WTC11 (cell line): ENCODE measurements at regions of chr11 and their contacts with region 1.

Region 1: DNA sequence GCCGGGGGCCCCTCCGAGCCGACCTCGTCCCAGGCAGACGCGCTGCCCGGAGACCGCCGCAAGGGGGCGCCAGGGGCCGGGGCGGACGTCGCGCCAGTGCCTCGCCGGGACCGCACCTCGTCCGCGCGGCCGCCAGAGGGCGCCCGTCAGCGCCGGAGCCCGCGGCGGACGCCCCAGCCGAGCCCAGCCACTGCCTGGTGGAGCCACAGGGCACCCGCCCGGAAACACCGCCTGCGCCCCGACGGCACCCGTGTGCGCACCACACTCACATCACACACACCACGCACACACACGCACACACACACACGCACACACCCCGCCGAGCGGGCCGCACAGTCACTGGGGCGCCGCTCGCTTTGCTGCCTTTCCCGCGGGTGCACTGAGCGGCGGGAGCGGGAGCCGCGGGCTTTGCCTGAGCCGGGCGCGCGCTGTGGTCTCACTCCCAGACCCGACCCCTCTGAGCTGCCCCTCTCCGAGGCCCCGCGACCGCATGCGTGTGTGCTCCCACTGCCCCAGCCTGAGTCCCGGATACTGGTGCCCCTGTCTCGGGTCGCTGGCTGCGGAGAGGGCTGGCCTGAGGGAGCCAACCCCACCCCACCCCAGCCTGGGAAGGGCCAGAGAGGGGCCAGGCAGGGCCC is 449.3 kb downstream of the OPCML start:
- DNase-seq: peak; percentile 86
- ATAC-seq: peak; percentile 78
- H3K4me3 Mint-ChIP-seq: peak overlapping the region; percentile 71
- H3K27ac Mint-ChIP-seq: no peak overlapping the region
- H3K4me1 Mint-ChIP-seq: peaks cover 31% of the 10 kb centered on the region
- H3K27me3 Mint-ChIP-seq: peaks cover 22% of the 10 kb centered on the region
- CTCF ChIP-seq: peak; percentile 98

Region 2: DNA sequence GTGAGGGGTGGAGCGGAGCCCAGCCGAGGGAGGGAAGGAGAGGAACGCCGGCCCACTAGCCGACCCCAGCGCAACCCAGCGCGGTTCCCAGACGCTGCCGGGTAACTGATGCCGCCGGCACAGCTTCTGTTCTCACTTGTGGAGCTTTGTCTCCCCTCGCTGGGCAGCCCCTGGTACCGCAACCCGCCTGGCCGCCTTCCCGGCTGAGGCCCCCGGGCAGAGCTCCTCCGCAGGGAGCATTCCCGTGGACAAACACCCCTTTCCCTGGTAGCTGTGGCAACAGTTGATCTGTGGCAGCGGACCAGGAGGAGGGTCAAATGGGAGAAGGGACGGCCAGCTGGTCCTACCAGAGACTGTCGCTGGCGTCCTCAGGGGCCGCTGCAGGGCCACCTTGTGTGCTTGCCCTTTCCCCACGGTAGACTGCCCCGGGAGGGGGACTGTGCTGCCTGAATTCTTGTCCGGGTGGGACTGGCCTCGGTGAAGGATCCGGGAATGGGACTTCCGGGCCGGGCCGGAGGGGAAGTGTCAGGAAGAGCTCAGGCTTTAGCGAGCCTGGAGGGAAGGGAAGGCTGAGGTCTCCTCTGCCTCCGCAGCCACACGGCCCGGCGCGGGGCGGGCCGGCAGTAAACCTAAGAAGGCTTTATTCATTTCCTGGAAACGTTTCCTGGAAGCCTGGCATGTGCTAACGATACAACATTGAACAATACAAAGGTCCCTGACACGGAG is 18.7 kb before region 1 on chr11:
- CTCF ChIA-PET with region 1: interaction called, 23 read pairs
- POLR2A ChIA-PET with region 1: no interaction called
- DNase-seq: peak; percentile 90
- ATAC-seq: peak; percentile 90
- H3K4me3 Mint-ChIP-seq: peak overlapping the region; percentile 72
- H3K27ac Mint-ChIP-seq: no peak overlapping the region
- H3K4me1 Mint-ChIP-seq: peaks cover 18% of the 10 kb centered on the region
- H3K27me3 Mint-ChIP-seq: peaks cover 10% of the 10 kb centered on the region
- CTCF ChIP-seq: peak; percentile 37; the same call in 1 of the 2 replicates

Region 3: DNA sequence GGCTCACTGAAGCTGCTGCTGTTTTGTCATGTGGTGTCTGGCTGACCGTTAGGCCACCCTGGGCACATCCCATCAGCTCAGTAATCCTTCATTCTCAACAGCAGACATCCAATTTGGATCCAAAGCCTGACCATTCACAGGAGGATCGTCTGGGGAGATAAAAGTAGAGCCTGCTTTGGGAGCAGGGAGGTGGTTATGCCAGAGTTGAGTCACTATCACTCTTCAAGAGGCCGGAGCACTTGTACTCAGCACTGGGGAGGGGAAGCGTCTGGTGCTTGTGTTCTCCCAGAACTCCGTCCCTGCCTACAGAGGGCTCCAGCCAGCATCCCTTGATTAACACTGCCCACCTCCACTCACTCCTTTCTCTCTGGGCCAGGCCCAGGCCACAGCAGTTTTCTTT is 66.7 kb after region 1 on chr11:
- CTCF ChIA-PET with region 1: interaction called, 16 read pairs
- POLR2A ChIA-PET with region 1: no interaction called
- DNase-seq: no peak
- ATAC-seq: peak; percentile 81
- H3K4me3 Mint-ChIP-seq: no peak overlapping the region
- H3K27ac Mint-ChIP-seq: no peak overlapping the region; the same call in 1 of the 2 replicates
- H3K4me1 Mint-ChIP-seq: peaks cover 32% of the 10 kb centered on the region
- H3K27me3 Mint-ChIP-seq: no peaks in the 10 kb centered on the region; the same call in 1 of the 2 replicates
- CTCF ChIP-seq: no peak

Region 4: DNA sequence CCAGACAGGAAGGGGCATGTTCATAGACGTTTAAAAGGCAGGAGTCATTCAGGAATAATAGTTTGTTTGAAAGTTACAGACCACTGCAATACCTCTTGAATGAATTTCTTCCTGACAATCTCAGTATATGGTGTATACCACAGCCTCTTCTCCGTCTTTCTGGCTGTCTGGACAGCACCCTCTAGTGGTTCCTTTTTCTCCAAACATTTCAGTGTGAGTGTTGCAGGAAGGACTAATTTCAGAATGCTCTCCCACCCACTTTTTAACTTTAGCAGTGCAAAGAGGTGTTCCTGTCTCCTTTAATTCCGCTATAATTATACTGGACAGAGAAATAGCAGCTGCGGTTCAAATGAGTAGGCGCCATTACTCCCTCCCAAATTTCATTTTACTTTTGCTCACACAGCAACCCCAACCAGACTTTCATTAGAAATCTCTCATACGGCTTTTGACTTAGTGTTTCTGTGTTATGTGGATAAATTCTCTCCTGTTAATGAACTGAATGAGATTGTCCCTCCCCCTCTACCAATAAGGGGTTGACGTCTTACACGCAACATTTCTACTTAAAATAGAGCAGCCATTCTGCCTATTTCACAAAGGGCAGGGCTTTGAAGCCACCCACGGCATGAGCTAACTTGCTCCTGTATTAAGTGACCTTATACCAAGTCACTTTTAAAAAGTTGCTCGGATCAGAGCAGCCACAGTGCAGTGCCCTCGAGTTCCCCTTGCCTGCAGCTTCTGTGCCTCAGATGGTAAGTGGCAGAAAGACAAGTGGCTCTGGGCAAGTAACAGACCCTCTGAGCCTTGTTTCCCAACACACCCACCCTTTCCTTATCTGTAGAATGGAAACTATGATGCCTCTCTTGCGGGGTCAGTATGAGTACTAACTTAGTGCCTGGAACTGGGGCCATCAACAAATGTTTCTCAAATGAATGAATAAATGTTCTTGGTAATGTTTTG is 80.8 kb after region 1 on chr11:
- CTCF ChIA-PET with region 1: interaction called, 16 read pairs
- POLR2A ChIA-PET with region 1: no interaction called
- DNase-seq: no peak
- ATAC-seq: peak; percentile 66
- H3K4me3 Mint-ChIP-seq: no peak overlapping the region
- H3K27ac Mint-ChIP-seq: no peak overlapping the region
- H3K4me1 Mint-ChIP-seq: peaks cover 33% of the 10 kb centered on the region
- H3K27me3 Mint-ChIP-seq: no peaks in the 10 kb centered on the region
- CTCF ChIP-seq: peak; percentile 63